MCF 10A (cell line): ENCODE measurements at regions of chr15 and their contacts with region 1.

Region 1: DNA sequence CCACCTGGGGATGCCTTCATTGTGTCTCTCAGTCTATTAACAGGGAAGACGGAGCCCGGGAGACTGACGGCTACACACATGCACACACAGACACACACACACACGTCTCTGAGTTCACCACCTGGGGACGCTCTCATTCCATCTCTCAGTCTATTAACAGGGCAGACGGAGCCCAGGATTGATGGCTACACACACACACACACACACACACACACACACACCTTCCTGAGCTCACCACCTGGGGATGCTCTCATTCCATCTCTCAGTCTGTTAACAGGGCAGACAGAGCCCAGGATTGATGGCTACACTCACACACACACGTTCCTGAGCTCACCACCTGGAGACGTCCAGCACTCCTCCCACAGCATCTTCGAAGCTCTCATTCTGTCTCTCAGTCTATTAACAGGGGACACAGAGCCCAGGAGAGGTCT is 143.9 kb downstream of the OR4M2 start:
- DNase-seq: peak; percentile 57
- H3K4me3 Mint-ChIP-seq: peak overlapping the region; percentile 28
- H3K27ac Mint-ChIP-seq: no peak overlapping the region
- H3K4me1 Mint-ChIP-seq: peaks cover 9% of the 10 kb centered on the region
- H3K27me3 Mint-ChIP-seq: no peaks in the 10 kb centered on the region
- CTCF ChIP-seq: peak; percentile 32

Region 2: GRCh38 chr15:20348982-20349768 is 1875.1 kb before region 1 on chr15:
- CTCF ChIA-PET with region 1: interaction called, 251 read pairs
- POLR2A ChIA-PET with region 1: no interaction called
- intact Hi-C with region 1: no loop called
- DNase-seq: no peak
- H3K4me3 Mint-ChIP-seq: no peak overlapping the region
- H3K27ac Mint-ChIP-seq: no peak overlapping the region
- H3K4me1 Mint-ChIP-seq: no peaks in the 10 kb centered on the region
- H3K27me3 Mint-ChIP-seq: no peaks in the 10 kb centered on the region
- CTCF ChIP-seq: no peak

Region 3: GRCh38 chr15:20356444-20356910 is 1867.8 kb before region 1 on chr15:
- CTCF ChIA-PET with region 1: interaction called, 251 read pairs
- POLR2A ChIA-PET with region 1: interaction called, 8 read pairs
- intact Hi-C with region 1: no loop called
- DNase-seq: peak; percentile 75
- H3K4me3 Mint-ChIP-seq: peak overlapping the region; percentile 35
- H3K27ac Mint-ChIP-seq: peak overlapping the region; percentile 16
- H3K4me1 Mint-ChIP-seq: peaks cover 6% of the 10 kb centered on the region
- H3K27me3 Mint-ChIP-seq: no peaks in the 10 kb centered on the region
- CTCF ChIP-seq: peak; percentile 98

Region 4: GRCh38 chr15:22239806-22240180 is 15.5 kb after region 1 on chr15:
- CTCF ChIA-PET with region 1: interaction called, 83 read pairs
- POLR2A ChIA-PET with region 1: interaction called, 16 read pairs
- intact Hi-C with region 1: no loop called
- DNase-seq: no peak
- H3K4me3 Mint-ChIP-seq: peak overlapping the region; percentile 63
- H3K27ac Mint-ChIP-seq: peak overlapping the region; percentile 89
- H3K4me1 Mint-ChIP-seq: peaks cover 19% of the 10 kb centered on the region
- H3K27me3 Mint-ChIP-seq: no peaks in the 10 kb centered on the region
- CTCF ChIP-seq: no peak